Activated CD4-positive, alpha-beta memory T cell treated with anti-CD3 and anti-CD28 coated beads, Interleukin-2, amount 10 ng/mL, durations not matched to agents 7 days and 5 days (primary cell): ENCODE measurements at regions of chr1 and their contacts with region 1.

Region 1: DNA sequence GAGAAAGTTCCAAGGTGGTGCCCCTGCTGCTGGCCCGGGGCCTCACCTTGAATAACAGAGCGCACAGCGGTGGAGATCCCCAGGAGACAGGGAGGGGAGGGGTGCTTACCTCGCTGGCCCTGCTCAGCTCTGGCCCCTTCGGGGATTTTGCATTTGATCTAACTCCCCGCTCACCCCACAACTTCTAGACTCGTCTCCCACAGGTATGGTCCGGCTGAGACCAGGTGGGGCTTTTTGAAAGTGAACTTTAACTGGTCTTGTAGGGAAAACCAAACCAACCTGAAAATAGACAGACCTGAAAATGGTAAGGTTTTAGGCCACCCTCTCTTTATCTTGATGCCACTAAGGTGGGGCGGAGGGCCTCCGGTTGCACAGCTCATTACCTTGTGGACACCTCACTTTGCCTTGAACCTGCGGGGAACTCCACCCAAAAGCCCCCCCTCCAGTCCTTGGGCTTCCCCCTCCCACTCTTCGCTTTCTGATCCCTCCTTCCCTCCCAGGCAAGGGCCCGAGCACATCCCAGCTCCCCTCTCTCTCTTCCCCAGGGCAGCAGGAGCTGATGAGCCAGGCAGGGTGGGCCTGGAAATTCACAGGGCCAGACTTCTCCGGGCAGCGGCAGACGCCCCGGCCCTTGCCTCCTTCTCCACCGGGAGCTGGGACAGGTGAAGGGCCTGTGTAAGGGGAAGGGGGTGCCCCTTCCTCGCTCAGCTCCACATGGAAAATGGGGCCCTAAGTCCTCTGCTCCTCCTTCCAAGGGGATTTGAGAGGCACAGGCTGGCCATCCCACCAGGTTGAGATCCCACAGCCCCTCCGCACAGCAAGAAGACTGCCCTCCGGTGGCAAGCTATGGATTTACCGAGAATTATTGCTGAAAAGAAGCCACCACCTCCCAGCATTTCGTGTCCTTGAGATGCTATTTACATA is 16.1 kb downstream of the TNFRSF8 start:
- DNase-seq: peak; percentile 66
- H3K4me3 Mint-ChIP-seq: peak overlapping the region; percentile 56
- H3K27ac Mint-ChIP-seq: peak overlapping the region; percentile 79
- H3K4me1 Mint-ChIP-seq: peaks cover 74% of the 10 kb centered on the region
- H3K27me3 Mint-ChIP-seq: no peaks in the 10 kb centered on the region

Region 2: DNA sequence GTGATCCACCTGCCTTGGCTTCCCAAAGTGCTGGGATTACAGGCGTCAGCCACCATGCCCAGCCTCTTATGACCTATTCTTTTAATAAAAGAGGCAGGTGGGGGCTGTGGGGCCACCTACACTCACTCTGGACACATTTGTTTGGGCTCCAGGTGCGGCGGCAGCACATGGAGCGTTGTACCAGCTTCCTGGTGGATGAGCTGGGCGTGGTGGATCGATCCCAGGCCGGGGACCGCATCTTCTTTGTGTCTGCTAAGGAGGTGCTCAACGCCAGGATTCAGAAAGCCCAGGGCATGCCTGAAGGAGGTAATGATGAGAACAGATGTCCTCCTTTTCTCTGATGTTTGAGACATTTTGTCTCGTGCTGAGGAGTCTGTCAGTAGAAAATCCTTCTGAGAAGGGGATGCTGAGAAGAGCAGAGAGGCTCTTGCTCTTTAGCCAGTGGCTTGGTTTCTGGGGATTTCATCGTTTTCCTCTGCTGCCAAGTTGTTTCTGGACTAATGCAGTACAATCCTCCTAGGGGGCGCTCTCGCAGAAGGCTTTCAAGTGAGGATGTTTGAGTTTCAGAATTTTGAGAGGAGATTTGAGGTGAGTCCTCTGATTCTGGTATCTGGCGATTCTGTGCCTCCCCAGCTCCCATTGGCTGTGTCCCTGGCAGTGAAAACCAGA is 77.8 kb before region 1 on chr1:
- CTCF ChIA-PET with region 1: interaction called, 11 read pairs
- POLR2A ChIA-PET with region 1: no interaction called
- DNase-seq: peak; percentile 76
- H3K4me3 Mint-ChIP-seq: no peak overlapping the region
- H3K27ac Mint-ChIP-seq: peak overlapping the region; percentile 56
- H3K4me1 Mint-ChIP-seq: peaks cover 27% of the 10 kb centered on the region
- H3K27me3 Mint-ChIP-seq: no peaks in the 10 kb centered on the region